Left cardiac atrium (tissue), 4 donors: ENCODE measurements at regions of chr20 and their contacts with region 1.

Region 1: GRCh38 chr20:59403261-59403961 is 103.0 kb downstream of the EDN3 start:
- DNase-seq: peak; percentile 44
- ATAC-seq: peak; percentile 78 to 81

Region 2: GRCh38 chr20:58870239-58871014 is 533.0 kb before region 1 on chr20:
- intact Hi-C with region 1: loop called in 1 of 2 experiments (anchors 2 kb)
- DNase-seq: peak; percentile 76
- ATAC-seq: peak; percentile 85

Region 3: DNA sequence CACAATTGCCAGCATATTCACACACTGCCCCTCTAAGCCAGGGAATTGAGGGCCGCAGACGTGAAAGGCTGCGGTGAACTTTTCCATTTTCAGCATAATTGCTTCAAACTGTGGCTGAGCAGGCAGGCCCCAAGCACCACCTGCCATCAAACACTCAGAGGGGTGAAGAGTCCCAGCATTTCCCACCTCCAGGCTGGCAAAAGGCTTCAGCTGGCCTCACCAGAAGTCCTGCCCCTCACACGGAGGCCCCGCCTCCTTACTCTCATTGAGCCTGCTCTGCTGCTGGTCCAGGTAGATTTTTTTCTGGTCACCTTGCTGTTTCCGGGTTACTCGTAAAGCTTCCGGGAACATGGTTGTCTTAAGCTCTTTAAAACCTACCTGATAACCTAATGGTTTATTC is 308.8 kb before region 1 on chr20:
- intact Hi-C with region 1: loop called in 1 of 2 experiments (anchors 10 kb)
- DNase-seq: no peak
- ATAC-seq: no peak

Region 4: GRCh38 chr20:59518881-59519688 is 115.7 kb after region 1 on chr20:
- intact Hi-C with region 1: no loop called
- DNase-seq: no peak
- ATAC-seq: peak; percentile 34 to 67